IMR-90 (cell line): ENCODE measurements at regions of chr4 and their contacts with region 1.

Region 1: DNA sequence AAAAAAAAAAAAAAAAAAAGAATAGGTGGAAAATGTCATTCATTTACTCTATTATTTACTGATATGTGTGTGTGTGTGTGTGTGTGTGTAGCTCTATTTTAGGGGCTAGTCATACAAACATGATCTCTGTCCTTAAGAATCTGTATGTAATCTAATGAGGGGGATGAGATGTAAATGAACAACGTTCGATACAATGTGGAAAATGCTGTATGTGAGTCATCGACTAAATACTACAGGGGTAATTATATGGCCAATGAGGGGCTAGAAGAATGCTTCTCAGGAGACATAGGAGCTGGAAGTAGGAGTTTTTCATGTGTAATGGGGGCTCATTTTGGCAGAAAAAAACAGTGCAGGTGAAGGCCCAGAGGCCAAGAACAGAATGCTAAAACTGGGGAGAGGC is 41.9 kb downstream of the LEF1 start:
- DNase-seq: no peak
- ATAC-seq: no peak
- H3K4me3 ChIP-seq: no peak overlapping the region
- H3K27ac ChIP-seq: no peak overlapping the region
- H3K4me1 ChIP-seq: no peaks in the 10 kb centered on the region
- H3K27me3 ChIP-seq: no peaks in the 10 kb centered on the region
- CTCF ChIP-seq: no peak
- POLR2A ChIP-seq: no peak
- RAD21 ChIP-seq: no peak

Region 2: DNA sequence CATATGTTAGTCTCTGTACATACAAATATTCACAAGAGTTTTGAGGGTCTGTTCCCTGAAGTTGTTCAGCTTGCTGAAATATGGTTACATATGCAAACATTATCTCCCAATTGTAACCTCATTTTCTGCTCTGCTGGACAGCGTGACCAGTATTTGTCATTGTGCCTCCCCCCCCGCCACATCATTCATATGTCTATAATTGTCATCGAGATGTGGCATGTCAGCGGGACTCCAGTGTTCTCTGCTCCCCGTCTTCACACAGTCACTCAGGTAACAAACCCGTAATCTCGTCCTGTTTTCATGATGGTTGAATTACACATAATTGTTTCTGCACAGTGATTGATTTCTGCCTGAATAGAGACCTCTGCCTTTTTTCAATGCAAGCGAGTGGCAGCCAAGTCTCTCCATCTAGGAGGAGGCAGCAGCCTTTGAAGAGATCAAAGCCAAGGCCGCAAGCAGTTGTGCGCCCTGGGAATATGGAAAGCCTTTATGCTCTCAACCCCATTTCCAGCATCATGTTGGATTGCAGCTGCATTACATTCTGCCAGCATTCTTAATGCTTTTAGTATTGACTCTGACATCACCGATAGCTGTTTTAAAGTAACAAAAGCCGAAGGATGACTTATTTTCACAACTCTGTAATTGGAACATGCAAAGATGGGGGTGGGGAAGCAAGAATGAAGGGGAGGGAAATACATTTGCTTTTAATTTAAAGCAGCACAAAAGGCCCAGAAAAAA is 14.6 kb after region 1 on chr4:
- CTCF ChIA-PET with region 1: interaction called, 3 read pairs
- POLR2A ChIA-PET with region 1: no interaction called
- dilution Hi-C with region 1: no loop called
- in situ Hi-C with region 1: no loop called
- intact Hi-C with region 1: loop called (anchors 2 kb)
- DNase-seq: no peak
- ATAC-seq: no peak
- H3K4me3 ChIP-seq: no peak overlapping the region
- H3K27ac ChIP-seq: no peak overlapping the region
- H3K4me1 ChIP-seq: no peaks in the 10 kb centered on the region
- H3K27me3 ChIP-seq: peaks cover 2% of the 10 kb centered on the region
- CTCF ChIP-seq: no peak
- POLR2A ChIP-seq: no peak
- RAD21 ChIP-seq: no peak

Region 3: GRCh38 chr4:108193886-108194672 is 67.3 kb after region 1 on chr4:
- CTCF ChIA-PET with region 1: no interaction called
- POLR2A ChIA-PET with region 1: no interaction called
- dilution Hi-C with region 1: no loop called
- in situ Hi-C with region 1: no loop called
- intact Hi-C with region 1: no loop called
- DNase-seq: no peak
- ATAC-seq: peak; percentile 77
- H3K4me3 ChIP-seq: no peak overlapping the region
- H3K27ac ChIP-seq: peak overlapping the region; percentile 40; the same call in 1 of the 2 replicates
- H3K4me1 ChIP-seq: peaks cover 2% of the 10 kb centered on the region; the same call in 1 of the 2 replicates
- H3K27me3 ChIP-seq: no peaks in the 10 kb centered on the region; the same call in none of the 2 replicates
- CTCF ChIP-seq: no peak
- POLR2A ChIP-seq: no peak
- RAD21 ChIP-seq: no peak